Naive thymus-derived CD4-positive, alpha-beta T cell (primary cell): ENCODE measurements at regions of chr21 and their contacts with region 1.

Region 1: DNA sequence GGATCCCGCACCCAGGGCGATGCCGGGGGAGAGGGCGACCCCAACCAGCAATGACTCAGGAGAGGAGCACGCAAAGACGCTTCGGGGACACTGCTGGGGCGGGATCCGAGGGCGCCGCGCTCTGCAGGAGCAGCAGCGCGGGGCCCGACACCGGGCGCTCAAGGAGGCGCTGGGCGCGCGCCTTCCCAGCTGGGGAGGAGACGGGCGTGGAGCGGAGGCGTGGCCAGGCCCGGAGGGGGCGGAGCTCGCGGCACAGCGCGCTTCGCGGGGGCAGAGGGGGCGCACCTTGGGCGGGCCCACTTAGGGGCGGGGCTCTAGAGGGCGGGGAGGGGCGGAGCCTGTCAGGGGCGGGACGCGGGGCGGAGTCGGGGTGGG is 369 bp downstream of the SUMO3 start:
- DNase-seq: peak; percentile 87 to 98 (median 91)
- ATAC-seq: peak; percentile 96
- H3K4me3 ChIP-seq: peak overlapping the region; percentile 68
- H3K4me3 Mint-ChIP-seq: peak overlapping the region in 9 of 10 donors; percentile 27 to 83 (median 66)
- H3K27ac ChIP-seq: peak overlapping the region; percentile 96
- H3K27ac Mint-ChIP-seq: peak overlapping the region in 3 of 9 donors; percentile 21 to 42 (median 32)
- H3K4me1 ChIP-seq: no peaks in the 10 kb centered on the region
- H3K4me1 Mint-ChIP-seq: peaks cover 5 to 31% (median 10%) of the 10 kb centered on the region in 7 donors
- H3K27me3 ChIP-seq: no peaks in the 10 kb centered on the region
- H3K27me3 Mint-ChIP-seq: peaks cover 0 to 9% (median 0%) of the 10 kb centered on the region in 5 donors

Region 2: DNA sequence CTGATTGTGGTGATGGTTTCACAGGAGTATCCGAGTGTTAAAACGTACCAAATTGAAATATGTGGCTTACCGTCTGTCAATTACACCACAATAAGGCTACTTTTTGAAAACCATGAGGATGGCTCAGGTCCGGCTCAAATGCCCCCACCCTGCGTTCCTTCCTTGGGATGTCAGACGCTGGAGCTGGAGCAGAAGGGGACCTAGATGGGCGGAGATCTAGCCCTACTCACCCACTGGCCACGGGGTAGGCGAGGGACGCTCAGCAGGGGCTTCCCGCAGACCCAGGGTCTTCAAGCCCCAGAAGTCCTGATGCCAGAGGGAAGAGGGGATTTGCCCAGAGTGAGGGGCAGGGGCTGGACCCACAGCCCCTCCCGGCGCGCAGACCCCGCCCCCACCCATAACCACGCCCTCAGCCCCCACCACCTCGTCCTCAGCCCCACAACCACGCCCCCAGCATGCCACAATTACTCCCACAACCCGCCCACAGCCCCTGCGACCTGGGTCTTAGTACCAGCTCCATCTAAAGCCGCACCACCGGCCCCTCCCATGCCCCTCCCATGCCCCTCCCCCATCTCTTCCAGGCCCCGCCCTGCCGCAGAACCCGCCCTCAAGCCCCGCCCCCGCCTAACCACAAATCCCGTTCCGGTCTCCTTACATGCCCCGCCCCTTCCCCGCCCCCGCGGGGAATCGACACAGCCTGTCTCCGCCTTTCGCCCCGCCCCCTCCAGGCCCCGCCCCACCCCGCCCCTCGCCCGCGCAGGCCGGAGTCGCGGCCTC is 362.6 kb before region 1 on chr21 and contains the start of gene LRRC3:
- CTCF ChIA-PET with region 1: no interaction called
- POLR2A ChIA-PET with region 1: no interaction called
- intact Hi-C with region 1: loop called in 1 of 2 experiments (anchors 1 kb)
- DNase-seq: peak; percentile 61 to 82 (median 81)
- ATAC-seq: peak; percentile 91
- H3K4me3 ChIP-seq: peak within 1 kb of the TSS; percentile 60
- H3K4me3 Mint-ChIP-seq: peak within 1 kb of the TSS; percentile 68 to 84 (median 77)
- H3K27ac ChIP-seq: peak within 1 kb of the TSS; percentile 55
- H3K27ac Mint-ChIP-seq: peak within 1 kb of the TSS in 4 of 9 donors; percentile 1 to 60 (median 54)
- H3K4me1 ChIP-seq: peaks cover 0 to 6% of the 10 kb centered on the region in 2 donors
- H3K4me1 Mint-ChIP-seq: peaks cover 0 to 10% (median 6%) of the 10 kb centered on the region in 7 donors
- H3K27me3 ChIP-seq: no peaks in the 10 kb centered on the region
- H3K27me3 Mint-ChIP-seq: peaks cover 0 to 33% (median 12%) of the 10 kb centered on the region in 5 donors
- total RNA-seq, gene LRRC3: 0.79 to 3.3 (median 1.0) TPM

Region 3: DNA sequence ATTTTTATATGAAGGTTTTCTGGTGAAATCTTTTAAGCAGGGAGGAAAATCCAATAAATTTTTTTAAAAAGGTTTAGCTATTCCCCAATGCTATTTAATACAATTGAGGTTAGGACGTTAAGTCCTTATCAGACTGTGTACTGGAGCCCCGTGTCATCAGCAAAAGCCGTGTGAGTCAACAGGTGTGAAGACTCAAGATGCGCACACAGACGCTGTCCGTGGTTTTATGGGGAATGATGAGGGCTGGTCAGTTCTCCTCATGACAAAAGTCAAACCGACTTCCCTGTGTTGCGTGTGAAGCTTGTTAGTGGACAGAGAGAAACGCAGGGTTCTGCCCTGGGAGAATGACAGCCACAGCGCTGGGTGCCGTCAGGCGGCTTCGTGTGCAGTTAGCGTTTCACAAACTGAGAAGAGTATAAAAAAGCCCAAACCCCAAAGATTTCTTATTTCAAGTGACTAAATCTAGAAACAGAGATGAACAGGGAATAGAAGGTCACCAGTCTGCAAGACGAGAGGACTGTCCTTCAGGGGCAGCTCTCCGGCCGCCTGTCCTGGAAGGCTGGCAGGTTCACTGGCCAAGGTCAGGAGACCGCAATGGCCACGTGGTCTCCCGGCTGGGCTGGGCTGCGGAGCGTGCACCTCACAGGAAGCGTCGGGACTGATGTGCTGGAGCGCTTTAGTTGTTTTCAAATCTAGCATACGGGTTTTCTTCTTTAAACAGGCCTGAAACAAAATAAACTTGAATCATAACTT is 33.6 kb after region 1 on chr21:
- CTCF ChIA-PET with region 1: no interaction called
- POLR2A ChIA-PET with region 1: interaction called, 3 read pairs
- intact Hi-C with region 1: loop called in 1 of 2 experiments (anchors 1 kb)
- DNase-seq: peak in 1 of 9 donors; percentile 21
- ATAC-seq: no peak
- H3K4me3 ChIP-seq: no peak overlapping the region
- H3K4me3 Mint-ChIP-seq: peak overlapping the region in 9 of 10 donors; percentile 29 to 68 (median 53)
- H3K27ac ChIP-seq: peak overlapping the region; percentile 53
- H3K27ac Mint-ChIP-seq: peak overlapping the region; percentile 23 to 94 (median 87)
- H3K4me1 ChIP-seq: peaks cover under 1 to 47% of the 10 kb centered on the region in 2 donors
- H3K4me1 Mint-ChIP-seq: peaks cover 38 to 64% (median 55%) of the 10 kb centered on the region in 7 donors
- H3K27me3 ChIP-seq: no peaks in the 10 kb centered on the region
- H3K27me3 Mint-ChIP-seq: no peaks in the 10 kb centered on the region

Region 4: DNA sequence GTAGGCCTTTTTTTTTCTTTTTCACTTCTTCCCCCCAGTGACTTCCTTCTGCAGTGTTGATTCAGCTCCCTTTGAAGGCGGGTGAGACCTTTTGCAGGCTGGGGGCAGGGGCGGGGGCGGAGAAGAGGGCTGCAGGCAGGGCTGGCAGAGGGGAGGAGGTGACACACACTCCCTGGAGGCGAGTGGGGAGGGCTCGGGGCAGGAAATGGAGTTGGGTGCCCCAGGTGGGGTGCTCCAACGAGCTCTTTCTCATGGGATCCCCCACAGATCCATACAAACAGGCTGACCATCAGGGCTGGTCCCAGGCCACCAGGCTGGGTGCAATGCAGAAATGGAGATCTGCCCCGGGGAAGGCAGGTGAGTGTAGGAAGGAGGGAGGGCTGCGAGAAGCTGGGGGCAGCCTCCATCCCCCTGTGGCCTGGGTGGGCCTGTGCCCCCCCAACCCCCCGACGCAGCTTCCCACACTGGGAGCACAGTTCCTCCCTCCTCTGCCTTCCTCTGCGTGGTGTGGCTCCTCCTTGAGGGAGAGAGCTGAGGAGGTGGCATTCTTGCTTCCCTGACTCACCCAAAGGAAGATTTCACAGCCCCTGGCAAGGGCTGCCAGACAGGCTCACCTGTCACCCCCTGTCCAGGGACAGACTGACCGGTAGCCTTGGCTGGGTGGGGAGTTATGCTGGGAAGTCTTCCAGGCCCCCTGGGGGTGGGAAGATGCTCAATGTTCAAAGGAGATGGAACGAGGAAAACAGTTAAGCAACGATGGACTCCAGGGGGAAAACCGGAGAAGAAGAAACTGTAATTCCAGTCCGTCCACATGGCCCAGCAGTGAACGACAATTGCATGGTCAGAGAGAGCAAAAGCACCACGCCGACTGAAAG is 110.3 kb after region 1 on chr21:
- CTCF ChIA-PET with region 1: no interaction called
- POLR2A ChIA-PET with region 1: interaction called, 4 read pairs
- intact Hi-C with region 1: loop called in 1 of 2 experiments (anchors 2 kb)
- DNase-seq: peak; percentile 43 to 95 (median 85)
- ATAC-seq: peak; percentile 84
- H3K4me3 ChIP-seq: peak overlapping the region; percentile 100
- H3K4me3 Mint-ChIP-seq: peak overlapping the region; percentile 86 to 97 (median 93)
- H3K27ac ChIP-seq: peak overlapping the region; percentile 79
- H3K27ac Mint-ChIP-seq: peak overlapping the region; percentile 86 to 98 (median 95)
- H3K4me1 ChIP-seq: peaks cover 54 to 62% of the 10 kb centered on the region in 2 donors
- H3K4me1 Mint-ChIP-seq: peaks cover 65 to 82% (median 78%) of the 10 kb centered on the region in 7 donors
- H3K27me3 ChIP-seq: no peaks in the 10 kb centered on the region
- H3K27me3 Mint-ChIP-seq: no peaks in the 10 kb centered on the region

Region 5: GRCh38 chr21:45064618-45065399 is 247.3 kb after region 1 on chr21:
- CTCF ChIA-PET with region 1: no interaction called
- POLR2A ChIA-PET with region 1: no interaction called
- intact Hi-C with region 1: loop called in 1 of 2 experiments (anchors 5 kb)
- DNase-seq: no peak
- ATAC-seq: no peak
- H3K4me3 ChIP-seq: no peak overlapping the region
- H3K4me3 Mint-ChIP-seq: no peak overlapping the region
- H3K27ac ChIP-seq: no peak overlapping the region
- H3K27ac Mint-ChIP-seq: no peak overlapping the region
- H3K4me1 ChIP-seq: no peaks in the 10 kb centered on the region
- H3K4me1 Mint-ChIP-seq: no peaks in the 10 kb centered on the region
- H3K27me3 ChIP-seq: no peaks in the 10 kb centered on the region
- H3K27me3 Mint-ChIP-seq: peaks cover 0 to 27% (median 0%) of the 10 kb centered on the region in 5 donors

Region 6: GRCh38 chr21:45287438-45288391 is 470.2 kb after region 1 on chr21 and contains the start of gene POFUT2:
- CTCF ChIA-PET with region 1: no interaction called
- POLR2A ChIA-PET with region 1: no interaction called
- intact Hi-C with region 1: loop called in 1 of 2 experiments (anchors 5 kb)
- DNase-seq: peak; percentile 95 to 100 (median 98)
- ATAC-seq: peak; percentile 91
- H3K4me3 ChIP-seq: peak within 1 kb of the TSS; percentile 68
- H3K4me3 Mint-ChIP-seq: peak within 1 kb of the TSS; percentile 68 to 88 (median 87)
- H3K27ac ChIP-seq: peak within 1 kb of the TSS; percentile 97
- H3K27ac Mint-ChIP-seq: peak within 1 kb of the TSS; percentile 72 to 93 (median 87)
- H3K4me1 ChIP-seq: peaks cover 7 to 16% of the 10 kb centered on the region in 2 donors
- H3K4me1 Mint-ChIP-seq: peaks cover 11 to 46% (median 30%) of the 10 kb centered on the region in 7 donors
- H3K27me3 ChIP-seq: no peaks in the 10 kb centered on the region
- H3K27me3 Mint-ChIP-seq: peaks cover 0 to 10% (median 0%) of the 10 kb centered on the region in 5 donors
- total RNA-seq, gene POFUT2: 20.1 to 53.3 (median 47.8) TPM